ENCODE measurements at regions of chr12 and their contacts with region 1.

Region 1: GRCh38 chr12:71415336-71416231 is 24.0 kb upstream of the LGR5 start:
- DNase-seq: peak in 2 of 6 donors; percentile 7 to 30
- ATAC-seq: peak; percentile 79 to 88 (median 84)
- H3K4me3 ChIP-seq: no peak overlapping the region
- H3K27ac ChIP-seq: no peak overlapping the region
- H3K4me1 ChIP-seq: no peaks in the 10 kb centered on the region
- H3K27me3 ChIP-seq: no peaks in the 10 kb centered on the region
- CTCF ChIP-seq: peak in 3 of 4 donors; percentile 45 to 65 (median 60)

Region 2: DNA sequence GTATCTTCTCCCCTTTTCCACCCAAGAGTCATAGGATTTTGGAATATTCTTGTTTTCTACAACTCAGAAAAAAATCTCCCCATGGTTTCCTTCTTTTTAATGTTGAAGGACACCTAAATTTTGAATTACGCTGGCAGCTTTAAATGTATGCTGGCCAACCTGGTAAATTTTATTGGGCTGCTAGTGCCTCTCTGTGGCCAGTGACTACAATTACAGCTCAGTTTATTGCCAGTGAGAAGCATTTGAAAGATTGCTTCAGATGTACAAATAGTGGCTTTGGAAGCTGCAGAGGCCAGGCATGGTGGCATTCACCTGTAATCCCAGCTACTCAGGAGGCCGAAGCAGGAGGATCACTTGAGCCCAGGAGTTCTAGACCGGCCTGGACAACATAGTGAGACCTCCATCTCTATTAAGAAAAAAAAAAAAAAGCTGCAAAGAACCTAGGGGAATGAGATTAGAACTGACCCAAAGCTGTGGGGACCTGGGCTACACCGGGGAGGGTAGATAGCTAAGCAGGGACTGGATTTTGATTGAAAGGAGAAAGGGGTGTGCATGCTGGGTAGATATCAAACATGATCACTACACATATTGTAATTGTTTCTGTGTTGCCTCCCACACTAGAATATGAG is 331.5 kb after region 1 on chr12:
- intact Hi-C with region 1: loop called in 2 of 3 experiments (anchors 5 kb)
- DNase-seq: peak in 3 of 6 donors; percentile 28 to 64 (median 40)
- ATAC-seq: peak; percentile 94 to 100 (median 99)
- H3K4me3 ChIP-seq: no peak overlapping the region
- H3K27ac ChIP-seq: no peak overlapping the region
- H3K4me1 ChIP-seq: no peaks in the 10 kb centered on the region
- H3K27me3 ChIP-seq: no peaks in the 10 kb centered on the region
- CTCF ChIP-seq: peak; percentile 38 to 64 (median 58)

Measured in pancreas (tissue), 10 donors.